HCT116 (cell line): ENCODE measurements at regions of chr2 and their contacts with region 1.

Region 1: GRCh38 chr2:15636972-15637785 is 45.5 kb downstream of the DDX1 start:
- DNase-seq: peak; percentile 23
- ATAC-seq: peak; percentile 89
- H3K4me3 ChIP-seq: no peak overlapping the region
- H3K27ac ChIP-seq: no peak overlapping the region
- H3K4me1 ChIP-seq: peaks cover 0 to 4% of the 10 kb centered on the region in 2 experiments; a peak in 1 of 4 replicates
- H3K27me3 ChIP-seq: no peaks in the 10 kb centered on the region
- CTCF ChIP-seq: peak; percentile 68 to 99 (median 86)
- POLR2A ChIP-seq: no peak
- RAD21 ChIP-seq: peak; percentile 96

Region 2: GRCh38 chr2:15492773-15493325 is 144.3 kb before region 1 on chr2:
- CTCF ChIA-PET with region 1: no interaction called
- POLR2A ChIA-PET with region 1: no interaction called
- RAD21 ChIA-PET with region 1: no interaction called
- intact Hi-C with region 1: no loop called
- DNase-seq: no peak
- ATAC-seq: no peak
- H3K4me3 ChIP-seq: no peak overlapping the region
- H3K27ac ChIP-seq: no peak overlapping the region
- H3K4me1 ChIP-seq: no peaks in the 10 kb centered on the region
- H3K27me3 ChIP-seq: no peaks in the 10 kb centered on the region
- CTCF ChIP-seq: no peak
- POLR2A ChIP-seq: no peak
- RAD21 ChIP-seq: no peak

Region 3: GRCh38 chr2:15506231-15506819 is 130.9 kb before region 1 on chr2:
- CTCF ChIA-PET with region 1: no interaction called
- POLR2A ChIA-PET with region 1: no interaction called
- RAD21 ChIA-PET with region 1: no interaction called
- intact Hi-C with region 1: no loop called
- DNase-seq: no peak
- ATAC-seq: no peak
- H3K4me3 ChIP-seq: no peak overlapping the region
- H3K27ac ChIP-seq: no peak overlapping the region
- H3K4me1 ChIP-seq: no peaks in the 10 kb centered on the region; a peak in 1 of 4 replicates
- H3K27me3 ChIP-seq: no peaks in the 10 kb centered on the region
- CTCF ChIP-seq: no peak
- POLR2A ChIP-seq: no peak
- RAD21 ChIP-seq: no peak

Region 4: GRCh38 chr2:15748736-15749323 is 111.7 kb after region 1 on chr2:
- CTCF ChIA-PET with region 1: no interaction called
- POLR2A ChIA-PET with region 1: no interaction called
- RAD21 ChIA-PET with region 1: no interaction called
- intact Hi-C with region 1: loop called (anchors 1 kb)
- DNase-seq: peak; percentile 55
- ATAC-seq: peak; percentile 96
- H3K4me3 ChIP-seq: no peak overlapping the region
- H3K27ac ChIP-seq: no peak overlapping the region
- H3K4me1 ChIP-seq: no peaks in the 10 kb centered on the region
- H3K27me3 ChIP-seq: no peaks in the 10 kb centered on the region
- CTCF ChIP-seq: peak; percentile 82 to 87 (median 85)
- POLR2A ChIP-seq: no peak
- RAD21 ChIP-seq: peak; percentile 75

Region 5: DNA sequence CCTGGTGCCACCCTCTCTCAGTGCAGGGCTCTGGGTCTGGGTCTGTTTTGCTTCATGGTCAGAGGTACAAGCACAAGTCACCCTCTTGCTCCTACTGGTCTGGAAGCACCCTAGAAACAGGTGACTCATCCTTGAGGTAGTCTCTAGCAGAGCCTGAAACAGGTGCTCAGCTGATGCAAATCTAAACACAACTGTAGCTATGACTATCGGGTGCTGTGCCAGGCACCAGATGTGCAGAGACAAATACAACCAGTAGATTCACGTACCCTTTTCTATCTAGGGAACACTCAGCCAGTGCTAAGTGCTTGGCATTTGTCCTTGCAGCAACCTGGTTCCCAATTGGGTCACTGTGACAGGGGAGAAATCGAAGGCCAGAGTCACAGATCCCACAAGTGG is 162.3 kb after region 1 on chr2:
- CTCF ChIA-PET with region 1: no interaction called
- POLR2A ChIA-PET with region 1: no interaction called
- RAD21 ChIA-PET with region 1: no interaction called
- intact Hi-C with region 1: no loop called
- DNase-seq: no peak
- ATAC-seq: peak; percentile 66
- H3K4me3 ChIP-seq: no peak overlapping the region
- H3K27ac ChIP-seq: no peak overlapping the region
- H3K4me1 ChIP-seq: 0 out of 4 replicates have a peak, but pooled peaks cover 0 to 2% of the 10 kb centered on the region in 2 experiments
- H3K27me3 ChIP-seq: peaks cover 13% of the 10 kb centered on the region; the same call in 1 of the 2 replicates
- CTCF ChIP-seq: no peak
- POLR2A ChIP-seq: no peak
- RAD21 ChIP-seq: no peak

Region 6: DNA sequence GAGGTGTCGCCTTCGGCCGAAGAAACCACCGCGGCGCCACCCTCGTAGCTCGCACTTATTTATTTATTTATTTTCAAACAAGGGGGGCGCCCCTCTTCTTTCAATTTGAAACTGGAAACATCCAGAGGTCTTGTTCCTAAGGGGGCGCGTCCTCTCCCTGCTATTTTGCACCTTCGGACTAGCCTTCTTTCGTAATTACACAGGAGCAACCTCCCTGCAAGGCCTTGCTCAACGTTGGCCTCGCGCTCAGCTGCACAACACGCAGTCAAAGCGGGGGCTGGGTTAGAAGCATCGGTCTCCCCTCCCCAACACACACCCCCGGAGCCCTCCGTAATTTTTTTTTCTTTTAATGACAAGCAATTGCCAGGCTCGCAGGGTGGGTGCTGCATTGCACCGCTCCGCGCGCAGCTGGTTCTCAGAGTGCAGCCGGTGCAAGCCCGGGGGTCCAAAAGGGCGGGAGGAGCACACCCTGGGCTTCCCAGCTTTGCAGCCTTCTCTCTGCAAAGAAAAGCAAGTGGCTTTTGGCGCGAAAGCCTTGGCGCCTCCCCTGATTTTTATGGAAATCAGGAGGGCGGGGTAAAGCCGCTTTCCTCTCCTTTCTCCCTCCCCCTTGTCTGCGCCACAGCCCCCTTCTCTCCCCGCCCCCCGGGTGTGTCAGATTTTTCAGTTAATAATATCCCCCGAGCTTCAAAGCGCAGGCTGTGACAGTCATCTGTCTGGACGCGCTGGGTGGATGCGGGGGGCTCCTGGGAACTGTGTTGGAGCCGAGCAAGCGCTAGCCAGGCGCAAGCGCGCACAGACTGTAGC is 302.9 kb after region 1 on chr2 and contains the start of gene MYCN:
- CTCF ChIA-PET with region 1: no interaction called
- POLR2A ChIA-PET with region 1: no interaction called
- RAD21 ChIA-PET with region 1: no interaction called
- intact Hi-C with region 1: loop called (anchors 1 kb)
- DNase-seq: no peak
- ATAC-seq: peak; percentile 60
- H3K4me3 ChIP-seq: peak within 1 kb of the TSS; percentile 21 to 42
- H3K27ac ChIP-seq: no peak within 1 kb of the TSS
- H3K4me1 ChIP-seq: peaks cover 0 to 9% of the 10 kb centered on the region in 2 experiments; a peak in 3 of 4 replicates
- H3K27me3 ChIP-seq: peaks cover 13% of the 10 kb centered on the region; the same call in 1 of the 2 replicates
- CTCF ChIP-seq: peak in 1 of 3 experiments; percentile 84; a peak in 4 of 6 replicates
- POLR2A ChIP-seq: no peak
- RAD21 ChIP-seq: peak; percentile 89
- total RNA-seq, gene MYCN: not detected

Region 7: DNA sequence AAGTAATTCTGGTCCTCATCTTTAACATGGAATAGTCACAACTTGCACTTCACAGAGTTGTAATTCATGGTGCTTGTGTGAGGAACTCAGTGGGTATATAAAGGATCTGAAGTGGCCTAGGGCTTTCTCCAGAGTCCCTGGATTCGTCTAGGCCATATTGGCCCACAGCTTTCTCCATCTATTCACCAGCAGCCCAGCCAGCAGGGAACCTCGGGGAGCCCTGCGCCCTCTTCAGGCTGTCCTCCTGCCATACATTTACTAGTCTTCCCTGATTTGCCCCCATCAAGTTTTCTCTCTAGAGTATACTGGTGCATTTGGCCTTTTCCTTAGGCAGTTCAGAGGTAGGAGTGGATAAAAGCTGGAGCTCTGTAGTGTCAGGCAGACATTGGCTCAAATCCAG is 581.4 kb after region 1 on chr2:
- CTCF ChIA-PET with region 1: no interaction called
- POLR2A ChIA-PET with region 1: no interaction called
- RAD21 ChIA-PET with region 1: no interaction called
- intact Hi-C with region 1: loop called (anchors 2 kb)
- DNase-seq: peak; percentile 3
- ATAC-seq: peak; percentile 87
- H3K4me3 ChIP-seq: no peak overlapping the region
- H3K27ac ChIP-seq: no peak overlapping the region
- H3K4me1 ChIP-seq: no peaks in the 10 kb centered on the region
- H3K27me3 ChIP-seq: peaks cover 4% of the 10 kb centered on the region
- CTCF ChIP-seq: peak; percentile 27 to 57 (median 47); a peak in 4 of 6 replicates
- POLR2A ChIP-seq: no peak
- RAD21 ChIP-seq: peak; percentile 44

Region 8: GRCh38 chr2:16281451-16282336 is 644.5 kb after region 1 on chr2:
- CTCF ChIA-PET with region 1: no interaction called
- POLR2A ChIA-PET with region 1: no interaction called
- RAD21 ChIA-PET with region 1: no interaction called
- intact Hi-C with region 1: loop called (anchors 1 kb)
- DNase-seq: peak; percentile 10
- ATAC-seq: peak; percentile 88
- H3K4me3 ChIP-seq: no peak overlapping the region
- H3K27ac ChIP-seq: no peak overlapping the region
- H3K4me1 ChIP-seq: no peaks in the 10 kb centered on the region
- H3K27me3 ChIP-seq: peaks cover 9% of the 10 kb centered on the region; the same call in 1 of the 2 replicates
- CTCF ChIP-seq: peak; percentile 27 to 51 (median 46); a peak in 5 of 6 replicates
- POLR2A ChIP-seq: no peak
- RAD21 ChIP-seq: peak; percentile 55

Region 9: GRCh38 chr2:16487686-16488085 is 850.5 kb after region 1 on chr2:
- CTCF ChIA-PET with region 1: no interaction called
- POLR2A ChIA-PET with region 1: no interaction called
- RAD21 ChIA-PET with region 1: no interaction called
- intact Hi-C with region 1: loop called (anchors 1 kb)
- DNase-seq: no peak
- ATAC-seq: 0 out of 2 replicates have a peak, but pooled peaks have one; percentile 52
- H3K4me3 ChIP-seq: no peak overlapping the region
- H3K27ac ChIP-seq: no peak overlapping the region
- H3K4me1 ChIP-seq: no peaks in the 10 kb centered on the region
- H3K27me3 ChIP-seq: no peaks in the 10 kb centered on the region; the same call in 1 of the 2 replicates
- CTCF ChIP-seq: peak; percentile 37 to 57 (median 40); a peak in 4 of 6 replicates
- POLR2A ChIP-seq: no peak
- RAD21 ChIP-seq: peak; percentile 67

Region 10: GRCh38 chr2:16507655-16508489 is 870.7 kb after region 1 on chr2:
- CTCF ChIA-PET with region 1: no interaction called
- POLR2A ChIA-PET with region 1: no interaction called
- RAD21 ChIA-PET with region 1: no interaction called
- intact Hi-C with region 1: loop called (anchors 5 kb)
- DNase-seq: no peak
- ATAC-seq: peak; percentile 84
- H3K4me3 ChIP-seq: no peak overlapping the region
- H3K27ac ChIP-seq: no peak overlapping the region
- H3K4me1 ChIP-seq: no peaks in the 10 kb centered on the region
- H3K27me3 ChIP-seq: peaks cover 5% of the 10 kb centered on the region; the same call in 1 of the 2 replicates
- CTCF ChIP-seq: peak; percentile 15 to 26 (median 24); a peak in 3 of 6 replicates
- POLR2A ChIP-seq: no peak
- RAD21 ChIP-seq: peak; percentile 52